Sciatic nerve (tissue), 2 donors: ENCODE measurements at regions of chr17 and their contacts with region 1.

Region 1: GRCh38 chr17:1347589-1348323 is 52.3 kb downstream of the YWHAE start:
- DNase-seq: no peak
- ATAC-seq: peak; percentile 84

Region 2: DNA sequence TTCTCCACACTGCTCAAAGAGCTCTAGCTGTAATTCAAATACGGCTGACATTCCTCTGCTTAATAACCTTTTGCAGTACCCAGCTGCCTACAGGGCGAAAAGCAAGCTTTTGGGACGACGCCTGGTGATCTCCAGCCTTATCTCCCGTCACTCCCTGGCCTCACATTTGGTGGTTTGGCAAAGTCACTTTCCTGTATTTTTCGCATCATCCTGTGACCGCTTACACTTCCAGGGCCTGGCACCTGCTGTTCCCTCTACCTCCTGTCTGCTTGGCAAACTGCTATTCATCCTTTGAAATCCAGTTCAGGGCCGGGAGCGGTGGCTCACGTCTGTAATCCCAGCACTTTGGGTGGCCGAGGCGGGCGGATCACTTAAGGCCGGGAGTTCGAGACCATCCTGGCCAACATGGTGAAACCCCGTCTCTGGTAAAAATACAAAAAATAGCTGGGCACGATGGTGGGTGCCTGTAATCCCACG is 80.2 kb before region 1 on chr17:
- intact Hi-C with region 1: loop called (anchors 10 kb)
- DNase-seq: no peak
- ATAC-seq: peak; percentile 33

Region 3: DNA sequence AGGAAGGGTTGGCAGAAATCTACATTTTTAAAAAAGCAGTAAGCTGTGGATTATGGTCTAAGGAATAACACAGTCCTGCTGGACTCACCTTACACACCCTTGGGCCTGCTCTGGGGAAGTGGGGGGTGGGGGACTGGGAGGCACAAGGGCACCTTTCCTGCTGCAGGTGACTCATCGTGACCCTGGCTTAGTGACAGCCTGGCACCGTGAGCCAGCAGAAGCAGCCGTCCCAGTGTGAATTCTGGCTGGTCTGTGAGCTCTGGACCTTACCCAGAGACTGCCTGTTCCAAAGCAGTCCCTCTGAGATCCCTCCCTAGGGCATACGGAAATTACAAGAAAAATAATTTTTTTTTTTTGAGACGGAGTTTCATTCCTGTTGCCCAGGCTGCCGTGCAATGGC is 112.5 kb after region 1 on chr17:
- intact Hi-C with region 1: no loop called
- DNase-seq: no peak
- ATAC-seq: no peak